BJ (cell line): ENCODE measurements at regions of chr1 and their contacts with region 1.

Region 1: GRCh38 chr1:20640183-20640597 is 6.9 kb downstream of the PINK1 start:
- DNase-seq: no peak
- H3K4me3 ChIP-seq: no peak overlapping the region
- H3K27me3 ChIP-seq: no peaks in the 10 kb centered on the region
- CTCF ChIP-seq: peak; percentile 77

Region 2: GRCh38 chr1:20448671-20449071 is 191.5 kb before region 1 on chr1:
- CTCF ChIA-PET with region 1: no interaction called
- POLR2A ChIA-PET with region 1: no interaction called
- DNase-seq: no peak
- H3K4me3 ChIP-seq: no peak overlapping the region
- H3K27me3 ChIP-seq: 0 out of 2 replicates have a peak, but pooled peaks cover 3% of the 10 kb centered on the region
- CTCF ChIP-seq: no peak

Region 3: DNA sequence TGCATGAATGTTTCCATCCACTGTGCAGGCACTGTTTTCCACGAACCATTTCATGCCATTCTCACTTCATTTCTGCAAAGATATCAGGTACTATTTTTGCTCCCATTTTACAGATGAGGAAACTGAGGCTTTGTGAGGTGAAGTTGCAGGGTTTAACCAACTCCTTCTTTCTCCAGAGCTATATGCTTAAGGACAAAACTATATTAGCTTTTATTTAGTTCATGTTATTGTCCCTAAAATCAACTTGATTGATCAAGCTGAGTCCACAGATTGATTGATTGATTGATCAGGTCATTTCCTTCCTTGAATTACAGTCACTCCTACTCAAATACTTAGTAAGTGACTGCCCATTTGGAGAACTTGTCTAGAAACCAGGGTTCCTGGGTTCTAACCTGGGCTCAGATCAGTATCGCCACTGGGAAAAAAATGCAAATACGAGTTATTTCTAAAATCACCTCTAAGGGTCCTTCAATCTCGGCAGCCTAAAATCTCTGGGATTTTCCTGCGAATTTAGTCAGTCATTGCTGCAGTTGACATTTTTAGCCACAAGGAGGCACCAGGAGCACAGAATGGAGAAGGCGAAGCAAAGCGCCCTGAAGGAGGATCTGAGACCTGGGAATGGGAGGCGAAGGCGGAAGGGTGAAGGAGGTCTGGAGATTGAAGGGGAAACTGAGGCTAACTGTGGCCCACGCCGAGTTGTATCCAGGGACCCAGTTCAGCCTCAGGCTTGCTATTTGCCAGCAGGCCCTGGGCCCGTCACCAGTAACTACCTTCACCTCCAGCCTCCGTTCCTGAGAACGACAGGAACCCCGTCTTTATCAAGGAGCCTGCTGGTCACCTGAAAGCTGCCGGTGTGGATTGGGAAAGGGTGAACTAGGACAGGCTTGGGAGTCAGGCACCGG is 118.0 kb before region 1 on chr1:
- CTCF ChIA-PET with region 1: interaction called, 59 read pairs
- POLR2A ChIA-PET with region 1: no interaction called
- DNase-seq: no peak
- H3K4me3 ChIP-seq: no peak overlapping the region
- H3K27me3 ChIP-seq: peaks cover 7% of the 10 kb centered on the region
- CTCF ChIP-seq: peak; percentile 92

Region 4: GRCh38 chr1:20654104-20654690 is 14.0 kb after region 1 on chr1:
- CTCF ChIA-PET with region 1: interaction called, 21 read pairs
- POLR2A ChIA-PET with region 1: no interaction called
- DNase-seq: no peak
- H3K4me3 ChIP-seq: no peak overlapping the region
- H3K27me3 ChIP-seq: no peaks in the 10 kb centered on the region
- CTCF ChIP-seq: no peak